Right cardiac atrium (tissue), 5 donors: ENCODE measurements at regions of chr1 and their contacts with region 1.

Region 1: DNA sequence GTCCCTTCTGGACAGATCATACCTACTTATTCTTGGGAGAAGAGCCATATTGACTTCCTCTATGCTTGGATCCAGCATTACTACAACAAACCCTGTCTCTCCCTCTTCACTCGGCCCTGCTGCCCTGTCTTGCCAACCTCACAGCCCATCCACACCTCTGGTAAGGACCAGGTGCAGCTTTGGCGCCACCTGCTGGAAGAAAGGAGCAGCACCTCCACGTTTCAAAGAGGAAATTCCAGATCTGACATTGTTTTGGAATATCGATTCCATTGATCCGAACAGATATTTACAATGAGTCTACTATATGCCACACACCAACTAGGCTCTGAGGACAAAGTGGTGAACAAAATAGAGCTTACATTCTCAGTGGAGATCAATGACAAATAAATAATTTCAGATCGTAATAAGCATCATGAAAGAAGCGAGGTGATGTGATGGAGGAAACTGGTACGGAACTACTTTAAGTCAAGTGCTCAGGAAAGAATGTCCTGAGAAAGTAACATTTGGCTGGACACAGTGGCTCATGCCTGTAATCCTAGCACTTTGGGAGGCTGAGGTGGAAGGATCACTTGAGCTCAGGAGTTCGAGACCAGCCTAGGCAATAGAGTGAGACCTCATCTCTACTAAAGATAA is 18.7 kb downstream of the MFSD2A start:
- DNase-seq: peak; percentile 76 to 87 (median 85)
- ATAC-seq: peak; percentile 73 to 86
- H3K4me3 ChIP-seq: no peak overlapping the region
- H3K27ac ChIP-seq: no peak overlapping the region
- H3K4me1 ChIP-seq: no peaks in the 10 kb centered on the region
- H3K27me3 ChIP-seq: no peaks in the 10 kb centered on the region

Region 2: DNA sequence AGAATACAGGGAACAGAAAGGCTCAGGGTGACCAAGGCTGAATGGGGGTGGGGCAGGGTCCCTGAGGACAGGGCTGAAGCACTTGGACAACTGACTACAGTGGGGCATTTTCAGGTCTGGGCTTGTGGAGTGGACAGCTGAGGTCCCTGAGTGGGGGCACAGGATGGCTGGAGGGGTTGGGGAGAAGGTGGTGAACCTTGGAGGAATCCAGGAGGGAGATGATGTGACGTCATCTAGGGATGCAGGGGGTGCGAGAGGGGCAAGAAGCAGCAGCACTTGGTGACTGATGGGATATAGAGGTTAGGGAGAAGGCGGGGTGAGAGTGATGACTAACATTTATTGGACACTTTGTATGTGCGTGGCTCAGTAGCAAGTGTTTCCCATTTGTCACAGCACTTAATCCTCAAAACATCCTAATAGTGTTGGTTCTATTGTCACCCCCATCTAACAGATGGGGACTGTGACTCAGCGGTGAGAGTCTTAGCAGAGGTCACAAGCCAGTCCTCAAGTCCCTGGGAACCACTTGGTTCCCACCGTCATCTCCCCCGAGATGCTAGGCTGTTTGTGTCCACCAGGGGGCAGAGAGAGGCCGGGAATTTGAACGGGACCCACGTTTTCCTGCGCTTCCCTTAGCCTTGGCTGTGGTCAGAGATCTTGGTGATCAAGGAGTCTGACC is 157.1 kb before region 1 on chr1:
- intact Hi-C with region 1: loop called (anchors 2 to 5 kb)
- DNase-seq: peak; percentile 62 to 86 (median 82)
- ATAC-seq: peak; percentile 66 to 80
- H3K4me3 ChIP-seq: no peak overlapping the region
- H3K27ac ChIP-seq: no peak overlapping the region
- H3K4me1 ChIP-seq: no peaks in the 10 kb centered on the region
- H3K27me3 ChIP-seq: no peaks in the 10 kb centered on the region

Region 3: DNA sequence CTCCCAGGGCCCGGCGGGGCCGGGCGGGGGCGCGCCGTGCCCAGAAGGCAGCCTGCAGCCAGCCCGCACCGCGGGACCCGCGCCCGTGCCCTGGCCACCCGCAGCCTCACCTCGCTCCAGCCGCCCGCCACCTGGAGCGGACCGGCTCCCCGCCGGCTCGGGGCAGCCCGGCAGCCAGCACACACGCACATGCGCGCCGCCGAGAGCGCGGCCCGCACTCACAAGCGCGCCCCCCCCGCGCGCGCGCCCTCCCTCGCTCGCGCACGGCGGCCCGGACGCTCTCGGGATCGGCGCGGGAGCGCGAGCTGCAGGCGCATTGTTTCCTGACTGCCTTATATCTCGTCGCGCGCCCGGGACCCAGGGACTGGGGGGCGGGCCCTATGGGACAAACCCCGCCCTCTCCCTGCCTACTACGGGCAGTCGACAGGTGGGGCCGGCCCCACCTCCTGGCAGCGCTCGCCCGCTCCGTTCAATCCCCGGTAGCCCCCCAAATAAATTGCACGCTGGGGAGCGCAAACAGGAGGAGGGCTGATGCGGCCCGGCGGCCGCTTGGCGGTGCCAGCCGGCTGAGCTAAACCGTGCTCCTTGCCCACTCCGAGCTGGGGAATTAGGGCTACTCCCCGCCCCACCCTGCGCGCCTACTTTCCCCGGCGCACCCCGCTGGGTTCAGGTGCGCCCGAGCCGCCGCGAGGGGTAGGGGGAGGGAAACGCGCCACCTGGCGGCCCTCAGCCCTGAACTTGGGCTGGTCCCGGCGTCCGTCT is 71.7 kb before region 1 on chr1 and contains the start of gene MYCL:
- intact Hi-C with region 1: no loop called
- DNase-seq: peak; percentile 52 to 86 (median 82)
- ATAC-seq: peak; percentile 84 to 88
- H3K4me3 ChIP-seq: peak within 1 kb of the TSS; percentile 80
- H3K27ac ChIP-seq: no peak within 1 kb of the TSS
- H3K4me1 ChIP-seq: no peaks in the 10 kb centered on the region
- H3K27me3 ChIP-seq: no peaks in the 10 kb centered on the region
- total RNA-seq, gene MYCL: 0.33 to 0.97 (median 0.57) TPM

Region 4: DNA sequence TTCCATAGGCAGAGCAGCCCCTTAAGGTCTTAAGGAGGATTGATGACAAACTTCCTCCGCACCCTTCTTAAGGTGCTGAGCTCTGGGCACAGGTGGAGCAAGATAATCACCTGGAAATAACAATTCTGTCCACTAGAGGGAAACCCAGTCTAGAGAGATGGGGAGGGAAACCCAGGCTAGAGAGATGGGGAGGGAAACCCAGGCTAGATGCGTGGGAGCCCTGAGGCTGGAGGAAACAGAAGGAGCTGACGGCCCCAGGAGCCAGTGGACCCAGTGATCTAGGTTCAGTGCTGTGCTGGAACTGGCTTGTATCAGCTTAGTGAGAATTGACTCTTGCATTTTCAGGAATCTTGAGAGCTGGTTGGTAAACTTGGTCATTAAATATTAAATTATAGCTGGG is 54.1 kb before region 1 on chr1:
- intact Hi-C with region 1: loop called in 3 of 4 experiments (anchors 2 to 5 kb)
- DNase-seq: no peak
- ATAC-seq: peak; percentile 64 to 71
- H3K4me3 ChIP-seq: no peak overlapping the region
- H3K27ac ChIP-seq: no peak overlapping the region
- H3K4me1 ChIP-seq: no peaks in the 10 kb centered on the region
- H3K27me3 ChIP-seq: no peaks in the 10 kb centered on the region